Activated naive CD8-positive, alpha-beta T cell treated with anti-CD3 and anti-CD28 coated beads, Interleukin-2, amount 10 ng/mL, durations not matched to agents 7 days and 5 days (primary cell): ENCODE measurements at regions of chr12 and their contacts with region 1.

Region 1: DNA sequence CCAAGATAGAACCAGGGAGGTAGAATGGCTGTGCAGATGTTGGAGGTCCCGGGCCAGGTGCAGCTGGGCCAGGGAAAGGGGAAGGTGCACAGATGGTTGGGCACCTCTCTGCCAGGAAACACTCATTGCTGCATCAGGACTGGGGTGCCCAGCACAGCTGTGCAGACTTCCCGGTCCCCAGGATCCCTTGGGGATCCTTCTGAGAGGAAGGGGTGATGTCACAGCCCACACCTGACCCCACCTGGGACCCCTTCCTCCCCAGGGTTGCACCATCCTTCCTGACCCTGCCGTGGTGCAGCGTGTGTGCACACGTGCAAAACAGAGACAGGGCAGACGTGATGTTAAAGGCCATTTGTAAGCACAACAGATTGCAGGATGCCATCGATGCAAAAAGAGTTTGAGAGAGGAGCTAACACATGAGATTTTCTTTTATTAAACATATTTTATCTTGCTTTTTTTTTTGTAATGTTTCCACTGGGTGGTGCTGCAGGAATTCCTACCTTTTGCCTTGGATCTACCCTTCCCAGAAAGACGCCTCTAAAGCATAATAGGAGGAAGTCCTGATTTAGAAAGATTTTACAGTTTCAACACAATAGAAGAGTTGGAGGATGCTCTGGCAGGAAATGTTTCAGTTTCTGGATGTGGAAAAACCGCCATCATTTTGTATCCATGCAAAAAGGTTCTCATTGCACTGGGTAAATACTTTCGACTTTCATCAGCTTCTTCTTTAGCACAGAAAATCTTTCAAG is 14.8 kb downstream of the ELK3 start:
- DNase-seq: no peak
- ATAC-seq: no peak
- H3K4me3 Mint-ChIP-seq: peak overlapping the region; percentile 59
- H3K27ac Mint-ChIP-seq: peak overlapping the region; percentile 39
- H3K4me1 Mint-ChIP-seq: peaks cover 72% of the 10 kb centered on the region
- H3K27me3 Mint-ChIP-seq: no peaks in the 10 kb centered on the region

Region 2: DNA sequence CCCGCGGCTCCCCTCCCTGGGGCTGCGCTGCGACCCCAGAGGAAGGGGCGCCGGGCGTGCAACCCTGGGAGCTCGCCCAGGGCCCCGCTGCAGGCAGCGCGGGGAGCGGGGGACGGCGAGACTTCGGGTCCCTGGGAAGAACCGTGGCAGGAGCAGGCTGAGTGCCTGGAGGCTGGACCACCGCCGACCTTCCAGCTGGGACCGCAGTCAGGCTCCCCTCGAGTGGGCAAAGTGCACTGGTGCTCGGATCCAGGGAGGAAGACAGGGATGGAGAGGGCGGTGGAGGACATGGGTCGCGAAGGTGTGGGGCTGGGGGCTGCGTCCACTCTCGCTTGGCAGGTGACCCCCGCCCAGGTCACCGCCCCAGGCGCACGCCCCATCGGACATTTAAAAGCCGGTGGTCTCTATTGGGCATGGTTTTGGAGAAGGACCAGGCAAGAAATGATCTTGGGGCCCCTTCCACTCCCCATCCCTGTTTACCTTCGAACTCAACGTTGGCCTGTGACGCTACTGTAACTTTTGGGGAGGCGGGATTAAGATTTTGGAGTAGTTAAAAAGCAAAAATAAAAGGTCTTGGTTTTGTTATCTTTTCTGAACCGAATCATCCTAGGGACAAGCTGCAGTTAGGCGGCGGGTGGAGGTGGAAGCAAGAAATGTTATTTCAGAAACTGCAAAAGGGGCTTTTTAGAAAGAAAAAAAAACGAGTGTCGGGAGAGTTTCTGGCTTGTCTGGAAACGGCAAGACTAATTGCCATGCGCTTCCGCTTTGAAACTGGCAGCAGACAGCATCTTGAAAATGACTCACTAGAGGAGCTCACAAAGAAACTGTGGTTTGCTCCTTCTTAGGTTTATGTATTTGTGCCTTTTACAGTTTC is 13.8 kb before region 1 on chr12:
- POLR2A ChIA-PET with region 1: interaction called, 10 read pairs
- DNase-seq: peak; percentile 59
- ATAC-seq: peak; percentile 63
- H3K4me3 Mint-ChIP-seq: peak overlapping the region; percentile 93
- H3K27ac Mint-ChIP-seq: peak overlapping the region; percentile 94
- H3K4me1 Mint-ChIP-seq: peaks cover 43% of the 10 kb centered on the region
- H3K27me3 Mint-ChIP-seq: no peaks in the 10 kb centered on the region